ENCODE measurements at regions of chr6 and their contacts with region 1.

Region 1: GRCh38 chr6:127855542-127856159 is 45.2 kb downstream of the THEMIS start:
- DNase-seq: peak in 13 of 14 experiments; percentile 16 to 75 (median 47)
- ATAC-seq: peak; percentile 73
- H3K4me3 ChIP-seq: no peak overlapping the region
- H3K4me3 Mint-ChIP-seq: peak overlapping the region; percentile 31
- H3K27ac ChIP-seq: no peak overlapping the region
- H3K27ac Mint-ChIP-seq: peak overlapping the region; percentile 69
- H3K4me1 ChIP-seq: peaks cover 6% of the 10 kb centered on the region
- H3K4me1 Mint-ChIP-seq: peaks cover 86% of the 10 kb centered on the region
- H3K27me3 ChIP-seq: no peaks in the 10 kb centered on the region
- H3K27me3 Mint-ChIP-seq: no peaks in the 10 kb centered on the region
- CTCF ChIP-seq: peak; percentile 74

Region 2: DNA sequence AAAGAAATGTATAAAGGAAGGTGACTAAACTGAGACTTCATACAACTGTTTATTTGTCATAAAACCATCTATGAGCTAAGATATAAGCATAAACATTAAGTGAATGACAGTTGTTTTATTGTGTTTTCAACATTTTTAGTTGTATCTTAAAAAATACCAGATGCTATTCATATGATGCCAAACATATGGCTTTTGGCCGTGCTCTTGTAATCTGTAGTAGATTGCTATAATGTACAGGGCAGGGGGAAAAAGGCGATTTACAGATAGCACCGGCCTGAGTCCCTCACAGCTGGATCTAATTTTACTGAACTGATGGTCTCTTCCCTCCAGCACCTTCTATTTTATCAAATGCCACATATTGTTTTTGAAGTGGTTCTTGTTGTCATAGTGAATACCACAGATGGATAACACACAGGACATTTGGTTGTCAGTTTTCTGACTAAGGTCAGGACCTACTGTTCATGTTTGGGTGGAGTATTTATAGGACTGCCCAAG is 1467.5 kb before region 1 on chr6:
- CTCF ChIA-PET with region 1: no interaction called
- POLR2A ChIA-PET with region 1: no interaction called
- intact Hi-C with region 1: no loop called
- DNase-seq: no peak
- ATAC-seq: no peak
- H3K4me3 ChIP-seq: no peak overlapping the region
- H3K4me3 Mint-ChIP-seq: no peak overlapping the region
- H3K27ac ChIP-seq: no peak overlapping the region
- H3K27ac Mint-ChIP-seq: no peak overlapping the region
- H3K4me1 ChIP-seq: no peaks in the 10 kb centered on the region
- H3K4me1 Mint-ChIP-seq: no peaks in the 10 kb centered on the region
- H3K27me3 ChIP-seq: no peaks in the 10 kb centered on the region
- H3K27me3 Mint-ChIP-seq: no peaks in the 10 kb centered on the region
- CTCF ChIP-seq: no peak

Region 3: DNA sequence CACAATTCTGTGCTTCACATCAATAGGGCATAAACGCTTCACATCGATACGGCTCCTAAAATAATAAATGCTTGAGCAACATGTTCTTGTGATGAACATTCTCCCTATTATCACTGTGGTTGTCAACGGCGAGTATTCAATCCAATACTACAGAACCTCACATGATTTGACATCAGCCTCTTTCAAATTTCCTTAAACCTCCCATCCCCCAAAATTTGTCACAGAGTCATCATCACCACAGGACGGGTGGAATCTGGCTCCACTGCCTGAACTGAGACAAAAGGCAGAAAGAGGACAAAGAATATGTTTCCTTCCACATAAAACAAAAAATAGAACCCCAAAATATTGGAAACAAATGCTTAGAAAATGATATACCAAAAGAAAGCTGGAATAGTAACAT is 37.9 kb after region 1 on chr6:
- CTCF ChIA-PET with region 1: interaction called, 3 read pairs
- POLR2A ChIA-PET with region 1: interaction called, 3 read pairs
- intact Hi-C with region 1: loop called in 1 of 2 experiments (anchors 5 kb)
- DNase-seq: peak in 3 of 14 experiments; percentile 45 to 48 (median 46)
- ATAC-seq: peak; percentile 43
- H3K4me3 ChIP-seq: peak overlapping the region; percentile 37
- H3K4me3 Mint-ChIP-seq: peak overlapping the region; percentile 74
- H3K27ac ChIP-seq: peak overlapping the region; percentile 9 to 26
- H3K27ac Mint-ChIP-seq: peak overlapping the region; percentile 91
- H3K4me1 ChIP-seq: peaks cover 14% of the 10 kb centered on the region
- H3K4me1 Mint-ChIP-seq: peaks cover 66% of the 10 kb centered on the region
- H3K27me3 ChIP-seq: no peaks in the 10 kb centered on the region
- H3K27me3 Mint-ChIP-seq: no peaks in the 10 kb centered on the region
- CTCF ChIP-seq: no peak

Region 4: DNA sequence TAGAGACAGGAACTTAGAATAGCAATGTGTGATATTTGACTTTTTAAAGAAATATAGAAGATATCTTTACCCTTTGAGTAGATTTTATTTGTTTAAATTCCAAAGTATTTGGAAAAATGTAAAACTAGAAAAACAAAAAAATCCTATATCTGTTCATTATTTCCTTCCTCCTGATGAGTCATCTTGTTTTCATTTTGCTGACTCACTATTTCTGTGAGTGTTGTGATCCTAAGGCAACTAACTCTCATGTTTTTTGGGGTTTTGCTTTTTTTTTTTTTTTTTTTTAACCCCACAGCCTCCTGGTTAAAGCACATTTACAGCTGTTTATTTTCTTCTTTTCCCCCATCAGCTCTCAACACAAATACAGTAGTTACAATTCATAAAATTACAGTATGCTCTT is 83.0 kb after region 1 on chr6:
- CTCF ChIA-PET with region 1: interaction called, 6 read pairs
- POLR2A ChIA-PET with region 1: interaction called, 10 read pairs
- intact Hi-C with region 1: no loop called
- DNase-seq: peak in 3 of 14 experiments; percentile 26 to 62 (median 43)
- ATAC-seq: no peak
- H3K4me3 ChIP-seq: no peak overlapping the region
- H3K4me3 Mint-ChIP-seq: no peak overlapping the region
- H3K27ac ChIP-seq: no peak overlapping the region
- H3K27ac Mint-ChIP-seq: peak overlapping the region; percentile 34
- H3K4me1 ChIP-seq: peaks cover 7% of the 10 kb centered on the region
- H3K4me1 Mint-ChIP-seq: peaks cover 65% of the 10 kb centered on the region
- H3K27me3 ChIP-seq: no peaks in the 10 kb centered on the region
- H3K27me3 Mint-ChIP-seq: no peaks in the 10 kb centered on the region
- CTCF ChIP-seq: no peak

Region 5: DNA sequence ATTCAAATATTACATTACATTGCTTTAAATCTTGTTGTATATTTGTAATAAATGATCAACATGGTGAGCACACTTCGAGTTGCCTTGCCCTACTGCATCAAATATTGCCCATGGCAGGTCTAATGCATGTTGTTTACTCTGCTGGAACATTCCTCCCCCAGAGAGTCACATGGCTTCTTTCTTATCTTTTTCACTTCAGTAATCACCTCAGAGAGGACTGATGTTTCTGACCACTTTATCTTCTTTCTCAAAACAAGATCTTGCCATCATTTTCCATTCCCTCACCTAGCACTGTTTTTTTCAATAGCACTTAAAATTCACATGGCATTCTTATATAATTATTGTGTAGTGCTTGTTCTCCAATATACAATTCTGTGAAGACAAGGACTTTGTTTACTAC is 288.7 kb after region 1 on chr6:
- CTCF ChIA-PET with region 1: no interaction called
- POLR2A ChIA-PET with region 1: no interaction called
- intact Hi-C with region 1: no loop called
- DNase-seq: no peak
- ATAC-seq: no peak
- H3K4me3 ChIP-seq: no peak overlapping the region
- H3K4me3 Mint-ChIP-seq: no peak overlapping the region
- H3K27ac ChIP-seq: no peak overlapping the region
- H3K27ac Mint-ChIP-seq: no peak overlapping the region
- H3K4me1 ChIP-seq: no peaks in the 10 kb centered on the region
- H3K4me1 Mint-ChIP-seq: no peaks in the 10 kb centered on the region
- H3K27me3 ChIP-seq: no peaks in the 10 kb centered on the region
- H3K27me3 Mint-ChIP-seq: no peaks in the 10 kb centered on the region
- CTCF ChIP-seq: no peak

Region 6: DNA sequence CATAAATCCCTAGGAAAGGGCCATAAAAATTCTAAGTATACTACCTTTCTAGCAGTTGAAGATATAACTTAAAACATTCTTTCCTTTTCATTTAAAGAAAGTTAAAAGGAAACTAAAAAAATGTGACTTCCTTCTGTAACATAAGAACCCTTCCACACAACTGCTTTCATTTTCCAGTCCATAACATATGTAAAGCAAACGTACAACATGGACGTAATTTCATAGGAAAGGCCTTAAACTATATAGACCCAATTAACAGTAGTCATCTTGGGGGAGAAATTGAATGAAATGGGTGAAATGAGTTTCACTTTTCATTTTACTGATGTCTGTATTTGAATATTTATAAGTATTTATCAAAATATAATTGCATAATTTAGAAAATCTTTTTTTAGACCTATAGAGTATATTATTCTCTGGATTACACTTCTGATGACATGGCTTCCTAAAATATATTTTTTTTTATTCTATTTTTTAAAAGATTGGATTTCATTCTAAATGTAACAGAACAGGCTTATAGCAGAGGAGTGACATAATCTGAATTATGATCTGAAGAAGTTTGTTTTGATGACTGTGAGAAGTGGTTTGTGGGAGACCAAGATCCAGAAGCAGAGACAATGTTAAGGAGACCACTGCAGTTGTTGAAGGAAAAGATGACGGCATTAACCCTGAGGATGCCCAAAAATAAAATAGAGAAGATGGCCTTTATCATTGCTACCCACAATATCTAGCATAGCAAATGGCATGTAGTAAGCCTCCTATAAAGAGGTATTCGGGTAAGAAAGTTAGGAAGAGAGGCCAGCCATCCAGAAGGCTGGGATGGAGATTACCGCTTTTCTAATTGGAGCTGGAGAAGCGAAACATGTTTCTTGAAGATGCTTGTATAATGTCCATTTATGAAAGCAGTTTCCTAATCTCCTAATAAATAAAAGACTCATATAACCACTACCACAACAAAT is 404.4 kb after region 1 on chr6:
- CTCF ChIA-PET with region 1: no interaction called
- POLR2A ChIA-PET with region 1: no interaction called
- intact Hi-C with region 1: loop called in 1 of 2 experiments (anchors 10 kb)
- DNase-seq: peak in 3 of 14 experiments; percentile 39 to 62 (median 43)
- ATAC-seq: peak; percentile 75
- H3K4me3 ChIP-seq: peak overlapping the region; percentile 35
- H3K4me3 Mint-ChIP-seq: peak overlapping the region; percentile 85
- H3K27ac ChIP-seq: peak overlapping the region in 1 of 2 donors; percentile 3
- H3K27ac Mint-ChIP-seq: peak overlapping the region; percentile 76
- H3K4me1 ChIP-seq: peaks cover 11% of the 10 kb centered on the region
- H3K4me1 Mint-ChIP-seq: peaks cover 30% of the 10 kb centered on the region
- H3K27me3 ChIP-seq: no peaks in the 10 kb centered on the region
- H3K27me3 Mint-ChIP-seq: no peaks in the 10 kb centered on the region
- CTCF ChIP-seq: no peak

Region 7: DNA sequence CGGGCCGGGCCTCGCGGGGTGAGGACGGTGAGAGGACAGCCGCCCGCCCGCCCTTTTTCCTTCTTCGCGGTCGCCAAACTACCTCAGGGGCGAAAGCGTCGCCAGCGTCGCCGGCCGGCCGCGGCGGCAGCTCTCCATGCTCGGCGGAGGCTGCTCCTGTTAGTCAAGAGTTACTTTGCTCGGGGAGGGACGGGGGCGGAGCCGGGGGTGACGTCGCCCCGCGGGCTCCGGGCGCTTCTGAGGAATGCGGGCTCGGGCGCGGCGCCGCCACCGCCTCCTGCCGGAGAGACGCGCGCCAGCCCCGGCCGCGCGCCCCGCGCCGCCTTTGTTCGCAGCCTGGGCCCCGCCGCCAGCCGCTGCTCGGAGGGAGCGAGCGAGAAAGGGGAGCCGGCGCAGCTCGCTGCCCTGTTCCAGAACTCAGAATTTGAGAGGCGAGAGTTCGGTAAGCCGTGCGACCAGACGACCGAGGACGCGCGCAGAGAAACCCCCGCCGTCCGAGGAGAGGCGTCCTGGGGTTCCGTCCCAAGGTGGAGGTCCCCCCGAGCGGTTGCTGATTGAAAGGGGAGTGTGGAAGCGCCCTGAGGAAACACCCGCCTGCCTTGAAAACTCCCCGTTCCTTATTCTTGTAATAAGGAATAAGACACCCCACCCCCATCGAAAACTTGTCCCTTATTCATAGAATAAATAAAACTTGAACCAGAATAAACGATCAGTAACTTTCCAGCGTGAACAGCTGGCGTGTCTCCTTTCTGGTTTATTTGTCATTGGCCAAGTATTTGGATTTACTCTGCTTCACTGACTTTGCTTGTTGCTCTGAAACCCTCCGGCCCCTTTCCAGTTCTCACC is 665.0 kb after region 1 on chr6 and contains the start of gene PTPRK:
- CTCF ChIA-PET with region 1: interaction called, 3 read pairs
- POLR2A ChIA-PET with region 1: interaction called, 7 read pairs
- intact Hi-C with region 1: loop called (anchors 2 to 5 kb)
- DNase-seq: peak; percentile 72 to 92 (median 86)
- ATAC-seq: peak; percentile 84
- H3K4me3 ChIP-seq: peak within 1 kb of the TSS; percentile 80
- H3K4me3 Mint-ChIP-seq: peak within 1 kb of the TSS; percentile 98
- H3K27ac ChIP-seq: no peak within 1 kb of the TSS
- H3K27ac Mint-ChIP-seq: peak within 1 kb of the TSS; percentile 88
- H3K4me1 ChIP-seq: peaks cover 26% of the 10 kb centered on the region
- H3K4me1 Mint-ChIP-seq: peaks cover 19% of the 10 kb centered on the region
- H3K27me3 ChIP-seq: peaks cover 32 to 63% of the 10 kb centered on the region in 2 experiments
- H3K27me3 Mint-ChIP-seq: peaks cover 86% of the 10 kb centered on the region
- CTCF ChIP-seq: no peak
- total RNA-seq, gene PTPRK: 8.4 to 10.3 TPM

Region 8: GRCh38 chr6:128676456-128676855 is 820.8 kb after region 1 on chr6:
- CTCF ChIA-PET with region 1: no interaction called
- POLR2A ChIA-PET with region 1: no interaction called
- intact Hi-C with region 1: no loop called
- DNase-seq: no peak
- ATAC-seq: no peak
- H3K4me3 ChIP-seq: no peak overlapping the region
- H3K4me3 Mint-ChIP-seq: no peak overlapping the region
- H3K27ac ChIP-seq: no peak overlapping the region
- H3K27ac Mint-ChIP-seq: no peak overlapping the region
- H3K4me1 ChIP-seq: no peaks in the 10 kb centered on the region
- H3K4me1 Mint-ChIP-seq: no peaks in the 10 kb centered on the region
- H3K27me3 ChIP-seq: peaks cover 0 to 6% of the 10 kb centered on the region in 2 experiments
- H3K27me3 Mint-ChIP-seq: peaks cover 9% of the 10 kb centered on the region
- CTCF ChIP-seq: no peak

Region 9: DNA sequence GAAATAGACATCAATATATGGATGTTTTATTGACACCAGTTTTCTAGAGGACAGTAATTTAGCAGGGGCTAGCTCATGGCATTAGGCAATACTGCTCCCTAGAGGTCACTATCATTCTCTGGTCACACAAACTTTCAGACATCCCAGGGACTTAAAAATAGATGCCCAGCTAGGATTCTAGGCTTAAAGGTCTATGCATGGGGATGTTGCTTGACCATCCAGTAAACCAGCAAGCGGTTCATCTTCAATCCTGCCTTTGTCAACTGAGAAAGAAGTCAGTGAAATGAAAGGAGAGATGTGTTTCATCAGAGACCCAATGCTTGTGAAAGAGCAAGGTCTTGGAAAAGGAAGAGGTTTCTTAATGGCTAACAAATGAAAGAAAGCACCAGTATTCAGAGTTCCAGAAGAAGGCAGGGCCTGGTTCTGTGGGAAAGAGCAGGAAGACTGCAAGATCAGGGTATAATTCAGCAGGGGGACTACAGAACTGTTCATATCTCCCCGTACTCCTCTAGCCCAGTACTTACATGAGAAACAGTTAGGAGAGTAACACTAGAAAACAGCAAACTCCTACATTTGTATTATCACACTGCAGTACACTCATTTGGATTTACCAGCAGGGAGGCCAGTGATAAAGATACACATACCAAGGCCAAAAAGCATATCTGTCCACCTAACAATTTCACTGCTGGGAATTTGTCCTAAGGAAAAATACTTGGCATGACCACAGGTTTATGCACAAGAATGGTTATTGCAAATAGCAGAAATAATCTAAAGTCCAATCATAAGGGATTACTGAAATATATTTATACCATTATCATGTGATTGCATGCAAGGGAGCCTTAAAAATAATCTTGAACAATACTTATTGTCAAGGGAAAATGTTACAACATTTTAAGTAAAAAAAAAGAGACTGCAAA is 875.9 kb after region 1 on chr6:
- CTCF ChIA-PET with region 1: interaction called, 3 read pairs
- POLR2A ChIA-PET with region 1: no interaction called
- intact Hi-C with region 1: loop called (anchors 2 to 5 kb)
- DNase-seq: peak in 3 of 14 experiments; percentile 9 to 38 (median 31)
- ATAC-seq: no peak
- H3K4me3 ChIP-seq: no peak overlapping the region
- H3K4me3 Mint-ChIP-seq: no peak overlapping the region
- H3K27ac ChIP-seq: no peak overlapping the region
- H3K27ac Mint-ChIP-seq: no peak overlapping the region
- H3K4me1 ChIP-seq: no peaks in the 10 kb centered on the region
- H3K4me1 Mint-ChIP-seq: no peaks in the 10 kb centered on the region
- H3K27me3 ChIP-seq: no peaks in the 10 kb centered on the region
- H3K27me3 Mint-ChIP-seq: peaks cover 24% of the 10 kb centered on the region
- CTCF ChIP-seq: peak; percentile 50

Measured in CD4-positive, alpha-beta T cell (primary cell).